HepG2 (cell line): ENCODE measurements at regions of chr17 and their contacts with region 1.

Region 1: DNA sequence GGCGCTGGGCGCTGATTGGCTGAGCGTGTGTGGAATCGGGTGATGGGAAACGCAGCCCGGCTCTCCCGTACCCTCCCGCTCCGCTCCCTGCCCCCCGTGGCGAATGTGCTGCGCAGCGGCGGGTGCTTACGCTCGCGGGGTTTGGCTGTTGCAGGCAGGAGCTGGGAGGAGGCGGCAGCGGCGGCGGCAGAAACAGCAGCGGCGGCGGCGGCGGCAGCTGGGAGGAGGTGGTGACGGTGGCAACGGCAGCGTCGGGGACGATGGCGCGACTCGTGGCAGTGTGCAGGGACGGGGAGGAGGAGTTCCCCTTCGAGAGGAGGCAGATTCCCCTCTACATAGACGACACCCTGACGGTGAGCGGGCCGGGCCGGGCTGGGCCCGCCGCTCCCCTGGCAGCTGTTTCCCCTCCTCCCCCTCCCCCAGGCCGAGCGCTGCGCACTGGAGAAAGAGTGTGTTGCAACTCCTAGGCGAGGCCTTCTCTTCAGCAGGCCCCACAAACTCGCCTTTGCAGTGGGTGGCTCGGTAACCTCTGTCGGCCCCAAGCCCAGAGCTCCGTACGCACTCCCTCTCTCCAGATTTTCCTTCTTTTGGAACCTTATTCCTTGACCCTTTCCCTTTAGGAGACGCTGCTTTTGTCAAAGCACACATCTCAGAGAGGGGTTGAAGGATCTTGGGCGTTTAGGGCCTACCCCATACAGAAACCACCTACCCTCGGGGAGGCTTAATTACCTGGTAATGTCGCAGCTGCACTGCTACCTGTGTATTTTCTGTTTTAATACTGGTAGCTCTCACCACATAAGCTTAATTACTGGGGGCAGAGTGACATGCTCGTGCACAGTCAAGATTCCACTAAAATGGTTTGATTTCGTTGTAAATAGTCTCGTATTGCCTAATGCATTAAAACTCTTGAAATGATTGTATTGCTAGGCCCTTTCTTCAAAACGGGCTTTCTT is 1.0 kb downstream of the GGNBP2 start:
- DNase-seq: peak; percentile 91
- ATAC-seq: peak; percentile 88
- H3K4me3 ChIP-seq: peak overlapping the region; percentile 58 to 97 (median 91)
- H3K27ac ChIP-seq: peak overlapping the region; percentile 100
- H3K4me1 ChIP-seq: peaks cover 33% of the 10 kb centered on the region
- H3K27me3 ChIP-seq: peaks cover 0 to 5% of the 10 kb centered on the region in 2 experiments; a peak in 1 of 5 replicates
- CTCF ChIP-seq: peak; percentile 14; the same call in 1 of the 2 replicates
- EP300 ChIP-seq: peak; percentile 54 to 76
- POLR2A ChIP-seq: peak; percentile 59 to 65; a peak in 3 of 4 replicates
- RAD21 ChIP-seq: peak; percentile 46

Region 2: DNA sequence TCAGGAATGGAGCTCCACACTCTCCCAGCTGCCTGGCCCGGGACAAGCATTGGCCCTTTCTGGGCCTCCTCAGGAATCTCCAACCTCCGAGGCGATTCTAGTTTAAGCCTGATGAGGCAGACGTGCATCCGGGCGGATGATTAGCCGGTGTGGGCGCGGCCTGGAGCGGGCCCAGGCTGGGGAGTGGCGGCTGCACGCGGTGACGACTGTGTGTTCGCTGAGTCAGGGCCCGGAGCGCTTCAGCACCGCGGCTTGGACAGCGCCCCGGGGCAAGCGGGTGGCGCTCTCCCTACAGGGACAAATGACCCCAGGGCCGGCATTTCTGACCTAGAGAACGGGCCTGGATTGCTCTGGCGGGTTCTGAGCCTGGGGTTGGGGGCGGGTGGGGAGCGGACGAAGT is 81.8 kb before region 1 on chr17:
- CTCF ChIA-PET with region 1: no interaction called
- POLR2A ChIA-PET with region 1: no interaction called
- in situ Hi-C with region 1: no loop called
- intact Hi-C with region 1: no loop called
- DNase-seq: peak; percentile 45
- ATAC-seq: peak; percentile 95
- H3K4me3 ChIP-seq: no peak overlapping the region
- H3K27ac ChIP-seq: no peak overlapping the region
- H3K4me1 ChIP-seq: no peaks in the 10 kb centered on the region
- H3K27me3 ChIP-seq: peaks cover 2 to 24% of the 10 kb centered on the region in 2 experiments; a peak in 3 of 5 replicates
- CTCF ChIP-seq: no peak
- EP300 ChIP-seq: no peak
- POLR2A ChIP-seq: no peak
- RAD21 ChIP-seq: no peak

Region 3: DNA sequence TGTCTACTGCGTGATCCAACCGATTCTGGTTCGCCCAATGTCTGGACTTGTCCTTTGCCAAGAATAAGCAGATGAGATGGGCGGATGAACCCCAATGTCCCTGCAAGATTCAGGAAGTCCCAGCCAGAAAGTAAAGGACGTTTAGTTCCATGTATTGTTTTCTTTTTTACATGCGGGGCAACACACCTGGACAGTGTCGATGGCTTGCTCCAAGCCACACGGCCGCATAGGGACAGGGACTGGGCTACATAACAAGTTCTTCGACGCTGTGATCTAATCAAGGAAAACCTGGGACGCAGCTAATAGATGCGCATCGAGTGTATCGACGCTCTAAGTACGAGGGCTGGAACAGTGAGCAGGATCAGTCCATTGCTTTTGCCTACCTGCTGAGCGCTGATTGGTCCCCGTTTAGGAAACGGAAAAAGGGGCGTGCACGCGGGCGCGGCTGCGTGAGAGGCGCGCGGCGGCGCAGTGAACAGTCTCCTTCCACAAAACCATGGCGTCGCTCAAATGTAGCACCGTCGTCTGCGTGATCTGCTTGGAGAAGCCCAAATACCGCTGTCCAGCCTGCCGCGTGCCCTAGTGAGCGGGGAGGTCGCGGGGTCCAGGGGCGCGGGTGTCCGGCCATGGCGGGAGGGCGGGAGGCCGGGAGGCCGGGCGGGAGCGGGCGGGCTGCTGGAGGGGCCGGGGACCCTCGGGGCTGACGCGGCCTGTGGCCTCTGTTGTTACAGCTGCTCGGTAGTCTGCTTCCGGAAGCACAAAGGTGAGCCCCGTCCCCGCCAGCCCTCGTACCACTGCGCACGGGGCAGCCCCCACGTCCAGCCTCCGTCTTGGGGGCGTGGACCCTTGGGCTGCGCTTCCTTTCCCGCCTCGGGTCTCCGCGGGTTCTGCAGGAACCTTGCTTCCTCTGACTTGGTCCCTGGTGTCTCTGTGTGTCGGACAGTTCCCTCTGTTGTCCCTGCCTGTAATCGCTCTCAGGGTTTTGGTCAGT is 59.2 kb before region 1 on chr17 and contains the start of gene ZNHIT3:
- CTCF ChIA-PET with region 1: no interaction called
- POLR2A ChIA-PET with region 1: interaction called, 8 read pairs
- in situ Hi-C with region 1: no loop called
- intact Hi-C with region 1: loop called (anchors 5 kb)
- DNase-seq: peak; percentile 89
- ATAC-seq: peak; percentile 92
- H3K4me3 ChIP-seq: peak within 1 kb of the TSS; percentile 83 to 100 (median 95)
- H3K27ac ChIP-seq: peak within 1 kb of the TSS; percentile 81
- H3K4me1 ChIP-seq: peaks cover 41% of the 10 kb centered on the region
- H3K27me3 ChIP-seq: peaks cover 0 to 9% of the 10 kb centered on the region in 2 experiments; a peak in 1 of 5 replicates
- CTCF ChIP-seq: no peak
- EP300 ChIP-seq: peak in 1 of 2 experiments; percentile 17; a peak in 1 of 4 replicates
- POLR2A ChIP-seq: peak; percentile 87 to 92
- RAD21 ChIP-seq: no peak
- total RNA-seq, gene ZNHIT3: 66.6 and 88.3 TPM in 2 replicates

Region 4: DNA sequence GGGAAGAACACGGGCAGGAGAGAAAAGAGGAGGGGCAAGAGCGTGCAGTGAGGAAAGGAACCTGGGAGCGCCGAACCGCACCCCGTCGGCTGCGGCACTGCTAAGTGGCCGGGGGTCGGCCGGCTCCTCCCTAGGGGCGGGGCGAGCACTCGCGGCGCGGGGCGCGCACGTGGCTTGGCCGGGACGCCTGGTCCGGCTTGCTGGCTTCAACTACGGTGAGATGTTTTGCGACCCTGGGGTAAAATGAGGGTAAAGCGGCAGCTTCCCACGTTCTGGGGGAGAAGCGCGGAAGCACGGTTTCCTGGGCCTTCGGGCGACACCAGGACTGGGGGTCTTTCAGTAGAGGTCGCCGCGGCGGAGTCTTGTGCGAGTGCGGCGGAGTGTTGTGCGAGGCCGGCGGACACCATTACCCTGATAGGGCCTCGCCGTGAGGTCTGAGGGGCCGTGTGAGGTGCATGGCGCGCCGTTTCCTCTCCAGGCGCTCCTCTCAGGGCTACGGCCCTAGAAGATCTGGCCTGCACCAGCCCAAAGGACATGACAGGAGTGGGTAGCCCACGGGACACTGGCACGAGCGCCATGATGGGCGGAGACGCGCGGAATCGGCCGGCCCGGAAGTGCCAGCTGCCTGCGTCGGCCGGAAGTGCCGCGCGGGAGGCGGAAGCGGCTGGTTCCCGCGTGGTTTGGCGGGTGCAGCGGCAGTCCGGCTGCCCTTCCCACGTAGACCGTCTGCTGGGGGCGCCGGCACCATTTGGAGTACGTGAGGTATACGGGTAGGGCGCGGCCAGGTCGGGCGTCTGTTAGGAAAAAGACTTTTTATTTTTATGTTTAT is 10.7 kb before region 1 on chr17 and contains the starts of genes MYO19 and PIGW:
- CTCF ChIA-PET with region 1: no interaction called
- POLR2A ChIA-PET with region 1: interaction called, 107 read pairs
- in situ Hi-C with region 1: no loop called
- intact Hi-C with region 1: no loop called
- DNase-seq: peak; percentile 82
- ATAC-seq: peak; percentile 92
- H3K4me3 ChIP-seq: peak within 1 kb of the TSS; percentile 68 to 78 (median 76)
- H3K27ac ChIP-seq: peak within 1 kb of the TSS; percentile 98
- H3K4me1 ChIP-seq: peaks cover 38% of the 10 kb centered on the region
- H3K27me3 ChIP-seq: no peaks in the 10 kb centered on the region; a peak in 1 of 5 replicates
- CTCF ChIP-seq: peak; percentile 63
- EP300 ChIP-seq: no peak
- POLR2A ChIP-seq: peak; percentile 82 to 93
- RAD21 ChIP-seq: peak; percentile 20; the same call in 1 of the 2 replicates
- total RNA-seq, gene MYO19: 46.8 and 75.7 TPM in 2 replicates
- total RNA-seq, gene PIGW: 24.0 and 26.5 TPM in 2 replicates

Region 5: DNA sequence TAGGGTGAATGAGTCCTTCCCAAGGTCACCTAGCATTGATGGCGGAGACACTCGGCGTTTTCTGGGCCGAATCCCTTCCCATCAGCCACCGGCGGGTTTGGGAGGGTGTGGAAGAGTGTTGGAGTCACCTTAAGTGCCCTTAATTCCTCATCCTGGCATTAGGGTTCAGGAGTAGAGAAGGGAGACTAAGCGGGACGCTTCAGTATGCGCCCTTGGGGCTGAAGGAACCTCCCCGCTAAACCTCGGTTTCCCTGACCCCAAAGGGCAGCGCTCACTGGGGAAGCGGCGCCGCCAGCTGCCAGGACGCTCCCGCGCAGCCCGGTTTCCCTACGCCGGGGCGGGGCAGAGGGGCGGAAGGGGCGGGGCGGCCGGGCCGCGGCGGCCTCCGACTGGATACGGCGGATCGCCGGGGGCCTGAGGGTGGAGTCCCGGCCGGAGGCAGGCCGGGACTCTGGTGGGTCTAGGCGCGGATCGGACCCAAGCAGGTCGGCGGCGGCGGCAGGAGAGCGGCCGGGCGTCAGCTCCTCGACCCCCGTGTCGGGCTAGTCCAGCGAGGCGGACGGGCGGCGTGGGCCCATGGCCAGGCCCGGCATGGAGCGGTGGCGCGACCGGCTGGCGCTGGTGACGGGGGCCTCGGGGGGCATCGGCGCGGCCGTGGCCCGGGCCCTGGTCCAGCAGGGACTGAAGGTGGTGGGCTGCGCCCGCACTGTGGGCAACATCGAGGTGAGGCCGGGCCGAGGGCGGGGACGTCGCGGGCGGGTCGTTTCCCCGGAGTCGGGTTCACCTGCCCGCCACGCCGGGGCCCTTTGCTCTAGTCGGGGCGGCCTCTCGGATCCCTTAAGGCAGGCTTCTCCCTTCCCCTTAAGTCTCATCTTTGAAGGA is 45.9 kb after region 1 on chr17 and contains the start of gene DHRS11:
- CTCF ChIA-PET with region 1: no interaction called
- POLR2A ChIA-PET with region 1: interaction called, 32 read pairs
- in situ Hi-C with region 1: no loop called
- intact Hi-C with region 1: loop called (anchors 5 kb)
- DNase-seq: peak; percentile 59
- ATAC-seq: peak; percentile 93
- H3K4me3 ChIP-seq: peak within 1 kb of the TSS; percentile 80 to 96 (median 84)
- H3K27ac ChIP-seq: peak within 1 kb of the TSS; percentile 84
- H3K4me1 ChIP-seq: peaks cover 25% of the 10 kb centered on the region
- H3K27me3 ChIP-seq: no peaks in the 10 kb centered on the region; a peak in 1 of 5 replicates
- CTCF ChIP-seq: peak; percentile 49
- EP300 ChIP-seq: no peak
- POLR2A ChIP-seq: peak; percentile 51 to 75
- RAD21 ChIP-seq: 0 out of 2 replicates have a peak, but pooled peaks have one; percentile 37
- total RNA-seq, gene DHRS11: 19.6 and 28.4 TPM in 2 replicates

Region 6: GRCh38 chr17:36601303-36602029 is 55.7 kb after region 1 on chr17 and contains the start of gene MRM1:
- CTCF ChIA-PET with region 1: no interaction called
- POLR2A ChIA-PET with region 1: interaction called, 65 read pairs
- in situ Hi-C with region 1: no loop called
- intact Hi-C with region 1: no loop called
- DNase-seq: peak; percentile 86
- ATAC-seq: peak; percentile 84
- H3K4me3 ChIP-seq: peak within 1 kb of the TSS; percentile 71 to 90 (median 72)
- H3K27ac ChIP-seq: peak within 1 kb of the TSS; percentile 91
- H3K4me1 ChIP-seq: peaks cover 42% of the 10 kb centered on the region
- H3K27me3 ChIP-seq: no peaks in the 10 kb centered on the region; a peak in 1 of 5 replicates
- CTCF ChIP-seq: peak; percentile 67
- EP300 ChIP-seq: no peak
- POLR2A ChIP-seq: peak; percentile 86 to 91
- RAD21 ChIP-seq: no peak; the same call in 1 of the 2 replicates
- total RNA-seq, gene MRM1: 10.7 and 11.3 TPM in 2 replicates